ENCODE measurements at regions of chr6 and their contacts with region 1.

Region 1: GRCh38 chr6:99868074-99868702 is 125.8 kb downstream of the MCHR2 start:
- DNase-seq: peak; percentile 68
- H3K4me3 Mint-ChIP-seq: no peak overlapping the region
- H3K27ac Mint-ChIP-seq: no peak overlapping the region
- H3K4me1 Mint-ChIP-seq: no peaks in the 10 kb centered on the region
- H3K27me3 Mint-ChIP-seq: peaks cover 40% of the 10 kb centered on the region

Region 2: DNA sequence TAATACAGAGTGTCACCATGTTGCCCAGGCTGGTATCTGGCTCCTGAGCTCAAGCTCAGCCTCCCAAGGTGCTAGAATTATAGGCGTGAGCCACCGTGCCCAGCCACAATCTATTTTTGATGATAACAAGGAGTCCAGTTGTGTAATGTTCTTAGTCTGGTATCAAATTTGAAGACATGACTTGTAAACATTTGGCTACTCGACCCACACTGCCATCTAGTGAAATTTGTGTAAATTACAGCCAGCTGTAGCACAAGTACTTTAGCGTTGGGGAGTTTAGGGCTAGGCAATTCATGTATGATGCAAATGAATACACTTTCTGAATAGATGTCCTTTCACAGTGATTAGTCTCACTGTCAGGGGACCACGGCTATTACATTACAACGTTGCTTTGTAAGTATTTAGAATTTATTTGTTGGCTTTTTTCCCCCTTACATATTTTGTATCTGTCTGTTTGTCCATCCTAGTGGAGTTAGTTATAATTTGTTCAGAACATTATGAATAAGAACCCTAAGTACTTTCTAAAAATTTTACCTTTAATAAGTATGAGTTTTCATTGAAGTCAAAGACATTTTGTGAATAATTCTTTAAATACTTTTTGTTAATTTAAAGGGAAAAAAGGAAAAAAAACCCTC is 121.8 kb before region 1 on chr6:
- CTCF ChIA-PET with region 1: no interaction called
- POLR2A ChIA-PET with region 1: no interaction called
- DNase-seq: peak; percentile 53
- H3K4me3 Mint-ChIP-seq: no peak overlapping the region
- H3K27ac Mint-ChIP-seq: no peak overlapping the region
- H3K4me1 Mint-ChIP-seq: no peaks in the 10 kb centered on the region
- H3K27me3 Mint-ChIP-seq: peaks cover 26% of the 10 kb centered on the region

Region 3: GRCh38 chr6:99905209-99906106 is 37.3 kb after region 1 on chr6:
- CTCF ChIA-PET with region 1: interaction called, 10 read pairs
- POLR2A ChIA-PET with region 1: no interaction called
- DNase-seq: no peak
- H3K4me3 Mint-ChIP-seq: no peak overlapping the region
- H3K27ac Mint-ChIP-seq: no peak overlapping the region
- H3K4me1 Mint-ChIP-seq: no peaks in the 10 kb centered on the region
- H3K27me3 Mint-ChIP-seq: peaks cover 6% of the 10 kb centered on the region

Region 4: DNA sequence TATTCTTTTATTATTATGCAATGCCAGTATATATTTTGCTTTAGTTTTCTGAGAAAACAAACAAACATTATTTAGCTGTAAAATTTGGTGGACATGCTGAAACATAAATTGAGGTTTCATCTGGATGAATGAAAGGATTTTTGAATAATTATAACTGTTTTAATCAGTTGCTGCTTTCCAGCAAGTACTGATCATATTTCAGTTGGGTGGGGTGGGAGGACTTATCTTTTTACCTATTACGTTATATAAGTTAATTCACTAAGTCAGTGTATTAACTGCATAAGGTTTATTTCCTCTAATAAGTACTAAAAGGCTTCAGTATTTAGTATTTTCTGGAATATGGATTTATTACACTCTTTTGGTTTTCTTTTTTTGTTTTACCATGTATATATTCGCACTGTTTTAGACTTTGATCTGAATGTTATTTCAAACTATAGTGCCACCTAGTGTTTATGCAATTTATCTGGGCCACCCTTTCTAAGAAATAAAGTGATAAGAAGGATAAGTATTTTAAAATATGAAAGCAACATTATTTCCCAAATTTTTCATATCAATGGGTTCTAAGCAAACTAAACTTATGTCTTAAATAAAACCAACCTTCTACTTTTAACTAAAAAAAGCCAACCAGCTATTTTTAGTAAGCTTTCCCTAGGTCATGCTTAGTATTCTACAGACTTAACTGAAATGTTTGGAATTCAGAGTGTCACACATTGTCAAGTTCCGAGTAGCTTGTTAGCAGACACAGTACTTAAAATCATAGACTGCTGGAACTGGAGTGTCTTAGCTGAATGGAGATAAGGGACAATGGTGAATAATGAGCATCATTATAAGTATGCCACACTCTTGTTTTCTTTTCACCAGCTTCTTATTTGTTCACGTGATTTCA is 231.2 kb after region 1 on chr6:
- CTCF ChIA-PET with region 1: interaction called, 42 read pairs
- POLR2A ChIA-PET with region 1: no interaction called
- DNase-seq: no peak
- H3K4me3 Mint-ChIP-seq: no peak overlapping the region
- H3K27ac Mint-ChIP-seq: no peak overlapping the region
- H3K4me1 Mint-ChIP-seq: no peaks in the 10 kb centered on the region
- H3K27me3 Mint-ChIP-seq: peaks cover 22% of the 10 kb centered on the region